Breast epithelium (tissue), 4 donors: ENCODE measurements at regions of chr12 and their contacts with region 1.

Region 1: DNA sequence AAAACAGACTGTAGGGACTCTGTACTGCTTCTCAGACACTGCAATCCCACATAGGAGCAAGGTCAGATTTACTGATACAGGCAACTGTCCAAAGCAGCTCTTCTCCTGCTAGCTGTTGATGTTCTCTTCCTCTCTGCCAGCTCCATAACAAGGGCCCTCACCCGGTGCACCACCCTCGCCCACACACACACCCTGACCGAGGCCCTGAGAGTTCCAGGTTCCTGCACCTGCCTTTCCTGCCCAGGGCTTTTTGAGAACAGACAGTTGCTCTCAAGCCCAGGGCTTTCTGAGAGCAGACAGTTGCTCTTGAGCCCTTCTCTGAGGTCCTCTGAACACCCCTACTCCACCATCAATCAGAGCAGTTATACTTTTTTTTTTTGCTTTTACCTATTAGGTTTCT is 233.8 kb upstream of the GARIN6 start:
- DNase-seq: no peak
- H3K4me3 ChIP-seq: no peak overlapping the region
- H3K27ac ChIP-seq: no peak overlapping the region
- H3K4me1 ChIP-seq: no peaks in the 10 kb centered on the region
- H3K27me3 ChIP-seq: no peaks in the 10 kb centered on the region
- CTCF ChIP-seq: no peak
- POLR2A ChIP-seq: no peak

Region 2: DNA sequence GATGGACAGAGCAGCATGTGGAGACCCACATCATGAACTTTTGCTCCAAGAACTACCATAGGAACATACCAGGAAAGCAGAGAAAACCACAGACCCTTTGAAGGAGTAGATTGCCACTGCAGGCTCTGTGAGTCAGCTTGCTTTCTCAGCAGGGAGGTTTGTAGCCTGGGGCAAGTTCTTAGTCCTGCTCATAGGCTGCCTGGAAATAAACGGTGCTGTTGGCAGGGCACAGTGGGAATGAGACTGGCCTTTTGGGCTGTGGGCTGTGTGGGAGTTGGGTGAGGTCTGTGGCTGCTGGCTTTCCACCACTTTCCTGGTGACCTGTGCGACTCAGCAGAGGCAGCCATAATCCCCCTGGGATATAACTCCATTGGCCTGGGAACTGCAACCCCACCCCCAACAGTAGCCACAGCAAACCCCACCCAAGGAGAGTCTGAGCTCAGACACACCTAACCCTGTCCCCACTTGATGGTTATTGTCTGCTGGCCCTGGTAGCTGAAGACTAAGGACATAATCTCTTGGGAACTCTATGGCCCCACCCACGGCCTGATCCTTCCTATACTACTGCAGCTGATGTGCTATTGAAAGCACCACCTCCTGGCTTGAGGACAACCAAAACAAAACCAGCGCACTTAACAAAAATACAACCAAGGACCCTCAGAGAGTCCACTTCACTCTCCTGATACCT is 41.7 kb after region 1 on chr12:
- intact Hi-C with region 1: no loop called
- DNase-seq: peak; percentile 32 to 52
- H3K4me3 ChIP-seq: no peak overlapping the region
- H3K27ac ChIP-seq: peak overlapping the region in 1 of 2 donors; percentile 21
- H3K4me1 ChIP-seq: no peaks in the 10 kb centered on the region
- H3K27me3 ChIP-seq: no peaks in the 10 kb centered on the region
- CTCF ChIP-seq: no peak
- POLR2A ChIP-seq: no peak

Region 3: GRCh38 chr12:100229058-100229637 is 815.4 kb after region 1 on chr12:
- intact Hi-C with region 1: no loop called
- DNase-seq: no peak
- H3K4me3 ChIP-seq: peak overlapping the region in 1 of 3 donors; percentile 46
- H3K27ac ChIP-seq: peak overlapping the region; percentile 81 to 88
- H3K4me1 ChIP-seq: no peaks in the 10 kb centered on the region
- H3K27me3 ChIP-seq: no peaks in the 10 kb centered on the region
- CTCF ChIP-seq: peak in 1 of 3 donors; percentile 13
- POLR2A ChIP-seq: no peak

Region 4: DNA sequence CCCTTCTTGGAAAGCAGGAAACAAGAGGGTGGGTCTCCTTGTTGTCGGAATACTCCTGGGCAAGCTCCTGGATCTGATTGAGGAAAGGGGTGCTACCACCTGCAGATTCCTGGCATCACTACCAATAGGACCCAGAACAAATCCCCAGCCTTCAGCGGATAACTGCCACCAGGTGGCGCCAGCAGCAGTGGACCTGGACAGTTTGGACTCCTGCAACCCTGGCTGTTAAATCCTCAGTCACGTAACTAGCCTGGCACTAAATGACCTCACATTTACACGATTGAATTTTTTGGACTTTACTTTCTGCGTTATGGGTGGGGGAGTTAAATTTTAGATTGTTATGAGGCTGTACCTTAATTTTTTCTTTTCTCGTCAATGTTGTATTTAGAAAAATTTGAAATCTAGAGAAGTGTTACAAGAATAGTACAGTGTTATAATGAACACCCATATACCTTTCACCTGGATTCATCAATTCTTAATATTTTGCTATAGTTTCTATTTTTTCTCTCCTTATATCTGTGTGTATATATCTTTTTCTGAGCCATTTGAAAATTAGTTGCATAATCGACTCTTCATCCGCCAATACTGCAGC is 1255.3 kb after region 1 on chr12:
- intact Hi-C with region 1: loop called (anchors 5 kb)
- DNase-seq: peak; percentile 41 to 64
- H3K4me3 ChIP-seq: no peak overlapping the region
- H3K27ac ChIP-seq: no peak overlapping the region
- H3K4me1 ChIP-seq: no peaks in the 10 kb centered on the region
- H3K27me3 ChIP-seq: no peaks in the 10 kb centered on the region
- CTCF ChIP-seq: peak in 2 of 3 donors; percentile 47 to 65
- POLR2A ChIP-seq: no peak